Ascending aorta (tissue), 2 donors: ENCODE measurements at regions of chr1 and their contacts with region 1.

Region 1: DNA sequence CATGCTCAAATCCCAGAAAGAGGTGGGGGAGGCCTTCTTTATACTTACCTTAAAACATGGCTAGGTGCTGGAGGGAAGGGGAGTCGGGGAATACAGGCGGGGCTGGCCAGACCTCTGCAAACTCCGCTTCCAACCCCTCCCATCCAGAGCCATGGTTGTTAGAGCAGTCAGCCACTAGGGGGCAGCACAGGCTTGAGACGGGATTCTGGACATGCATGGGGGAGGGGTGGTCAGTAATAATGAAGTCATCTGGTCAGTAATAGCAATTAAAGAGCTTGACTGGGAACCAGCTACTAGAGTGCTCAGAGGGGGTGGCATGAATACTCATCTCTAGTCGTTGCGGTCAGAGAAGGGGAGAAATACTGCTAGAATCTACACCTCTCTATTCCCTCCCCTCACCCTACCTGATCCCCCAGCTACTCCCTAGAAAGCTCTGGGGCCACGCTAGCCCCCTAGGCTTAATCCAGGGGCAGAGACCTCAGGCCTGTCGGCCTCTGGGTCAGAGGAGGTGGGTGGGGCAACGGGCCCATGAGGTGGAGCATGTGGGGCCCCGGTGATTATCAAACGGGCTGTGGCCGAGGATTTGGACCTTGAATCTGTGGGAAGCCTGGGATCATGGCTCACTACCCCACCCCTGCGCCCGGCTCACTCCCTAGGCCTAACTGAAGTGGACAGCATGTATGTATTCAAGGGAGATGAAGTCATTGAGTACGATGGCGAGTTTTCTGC is 2.9 kb downstream of the CASQ1 start:
- DNase-seq: peak; percentile 50 to 91
- H3K4me3 ChIP-seq: peak overlapping the region in 1 of 2 donors; percentile 43
- H3K27ac ChIP-seq: peak overlapping the region in 1 of 2 donors; percentile 54
- H3K4me1 ChIP-seq: peaks cover 9 to 20% of the 10 kb centered on the region in 2 donors
- H3K27me3 ChIP-seq: no peaks in the 10 kb centered on the region
- CTCF ChIP-seq: peak; percentile 91 to 97 (median 94)

Region 2: DNA sequence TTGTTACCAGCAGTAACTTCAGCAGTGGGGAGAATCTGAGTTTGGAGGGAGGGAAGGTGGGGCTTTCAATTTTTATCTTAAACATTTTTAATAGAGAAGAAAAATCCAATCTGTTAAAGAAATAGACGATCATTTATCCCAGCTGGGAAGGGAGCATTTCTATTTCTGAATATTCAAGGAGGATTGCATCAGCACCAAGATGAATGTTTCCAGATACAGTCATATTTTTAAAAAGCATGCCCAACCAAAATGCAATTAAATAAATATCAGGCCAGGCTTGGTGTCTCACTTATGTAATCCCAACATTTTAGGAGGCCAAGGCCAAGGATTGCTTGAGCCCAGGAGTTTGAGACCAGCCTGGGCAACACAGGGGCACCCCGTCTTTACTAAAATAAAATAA is 43.5 kb before region 1 on chr1:
- intact Hi-C with region 1: loop called (anchors 5 kb)
- DNase-seq: no peak
- H3K4me3 ChIP-seq: no peak overlapping the region
- H3K27ac ChIP-seq: peak overlapping the region; percentile 67 to 72
- H3K4me1 ChIP-seq: peaks cover 5 to 12% of the 10 kb centered on the region in 2 donors
- H3K27me3 ChIP-seq: no peaks in the 10 kb centered on the region
- CTCF ChIP-seq: no peak

Region 3: GRCh38 chr1:160205242-160206035 is 12.2 kb after region 1 on chr1 and contains the start of gene PEA15:
- intact Hi-C with region 1: loop called (anchors 1 kb)
- DNase-seq: peak in 1 of 2 donors; percentile 85
- H3K4me3 ChIP-seq: peak within 1 kb of the TSS; percentile 87 to 94
- H3K27ac ChIP-seq: peak within 1 kb of the TSS; percentile 94 to 98
- H3K4me1 ChIP-seq: peaks cover under 1 to 42% of the 10 kb centered on the region in 2 donors
- H3K27me3 ChIP-seq: no peaks in the 10 kb centered on the region
- CTCF ChIP-seq: no peak
- total RNA-seq, gene PEA15: 178 TPM

Region 4: DNA sequence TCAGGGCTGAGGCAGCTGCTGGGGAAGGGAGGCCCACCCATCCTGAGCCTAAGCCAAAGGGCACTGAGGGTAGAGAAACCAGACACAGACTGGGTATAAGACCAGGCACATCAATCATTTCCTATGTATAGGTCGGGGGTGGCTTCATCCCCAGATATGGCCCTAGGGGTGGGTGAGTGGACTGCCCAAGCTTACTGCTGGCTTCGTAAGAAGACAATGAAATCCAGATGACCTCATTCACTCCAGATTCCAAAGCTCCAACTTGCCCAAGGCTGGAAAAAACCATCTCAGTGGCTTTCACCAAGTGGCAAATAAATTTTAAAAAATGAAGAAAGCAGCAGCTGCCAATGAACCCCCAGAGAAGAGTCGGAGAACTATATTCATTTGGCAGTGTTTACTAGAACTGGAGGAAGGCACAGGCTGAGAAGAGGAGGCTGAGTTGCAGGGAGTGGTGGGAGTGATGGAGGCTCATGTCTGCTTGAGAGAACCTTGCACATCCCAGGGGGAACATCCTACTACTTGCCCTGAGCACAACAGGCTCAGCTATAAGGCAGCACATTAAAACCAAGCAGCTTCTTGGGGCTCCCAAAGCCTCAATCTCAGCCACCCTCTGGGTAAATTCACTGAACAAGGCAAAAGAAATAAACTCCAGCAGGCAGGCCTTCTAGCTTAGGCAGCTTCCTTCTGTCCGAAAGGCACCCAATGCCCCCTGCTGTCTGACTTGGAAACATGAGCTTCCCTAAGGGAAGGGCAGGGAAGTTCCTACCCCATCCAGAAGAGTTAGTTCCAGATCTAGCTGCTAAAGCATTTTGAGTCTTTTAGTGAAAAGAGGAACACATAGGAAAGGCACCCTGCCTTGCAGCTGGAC is 26.0 kb after region 1 on chr1:
- intact Hi-C with region 1: loop called (anchors 1 kb)
- DNase-seq: peak in 1 of 2 donors; percentile 73
- H3K4me3 ChIP-seq: no peak overlapping the region
- H3K27ac ChIP-seq: peak overlapping the region; percentile 79 to 89
- H3K4me1 ChIP-seq: peaks cover 0 to 21% of the 10 kb centered on the region in 2 donors
- H3K27me3 ChIP-seq: no peaks in the 10 kb centered on the region
- CTCF ChIP-seq: peak; percentile 61 to 74 (median 65)

Region 5: GRCh38 chr1:160251687-160252526 is 58.7 kb after region 1 on chr1:
- intact Hi-C with region 1: loop called (anchors 1 kb)
- DNase-seq: peak in 1 of 2 donors; percentile 82
- H3K4me3 ChIP-seq: no peak overlapping the region
- H3K27ac ChIP-seq: peak overlapping the region; percentile 13 to 61
- H3K4me1 ChIP-seq: peaks cover 0 to 21% of the 10 kb centered on the region in 2 donors
- H3K27me3 ChIP-seq: no peaks in the 10 kb centered on the region
- CTCF ChIP-seq: peak; percentile 68 to 71 (median 70)

Region 6: GRCh38 chr1:160284782-160285344 is 91.6 kb after region 1 on chr1 and contains the start of gene PEX19:
- intact Hi-C with region 1: loop called (anchors 1 kb)
- DNase-seq: peak; percentile 65 to 96
- H3K4me3 ChIP-seq: peak within 1 kb of the TSS; percentile 72 to 86
- H3K27ac ChIP-seq: peak within 1 kb of the TSS; percentile 82 to 87
- H3K4me1 ChIP-seq: peaks cover 4 to 16% of the 10 kb centered on the region in 2 donors
- H3K27me3 ChIP-seq: no peaks in the 10 kb centered on the region
- CTCF ChIP-seq: no peak
- total RNA-seq, gene PEX19: 36.6 TPM

Region 7: DNA sequence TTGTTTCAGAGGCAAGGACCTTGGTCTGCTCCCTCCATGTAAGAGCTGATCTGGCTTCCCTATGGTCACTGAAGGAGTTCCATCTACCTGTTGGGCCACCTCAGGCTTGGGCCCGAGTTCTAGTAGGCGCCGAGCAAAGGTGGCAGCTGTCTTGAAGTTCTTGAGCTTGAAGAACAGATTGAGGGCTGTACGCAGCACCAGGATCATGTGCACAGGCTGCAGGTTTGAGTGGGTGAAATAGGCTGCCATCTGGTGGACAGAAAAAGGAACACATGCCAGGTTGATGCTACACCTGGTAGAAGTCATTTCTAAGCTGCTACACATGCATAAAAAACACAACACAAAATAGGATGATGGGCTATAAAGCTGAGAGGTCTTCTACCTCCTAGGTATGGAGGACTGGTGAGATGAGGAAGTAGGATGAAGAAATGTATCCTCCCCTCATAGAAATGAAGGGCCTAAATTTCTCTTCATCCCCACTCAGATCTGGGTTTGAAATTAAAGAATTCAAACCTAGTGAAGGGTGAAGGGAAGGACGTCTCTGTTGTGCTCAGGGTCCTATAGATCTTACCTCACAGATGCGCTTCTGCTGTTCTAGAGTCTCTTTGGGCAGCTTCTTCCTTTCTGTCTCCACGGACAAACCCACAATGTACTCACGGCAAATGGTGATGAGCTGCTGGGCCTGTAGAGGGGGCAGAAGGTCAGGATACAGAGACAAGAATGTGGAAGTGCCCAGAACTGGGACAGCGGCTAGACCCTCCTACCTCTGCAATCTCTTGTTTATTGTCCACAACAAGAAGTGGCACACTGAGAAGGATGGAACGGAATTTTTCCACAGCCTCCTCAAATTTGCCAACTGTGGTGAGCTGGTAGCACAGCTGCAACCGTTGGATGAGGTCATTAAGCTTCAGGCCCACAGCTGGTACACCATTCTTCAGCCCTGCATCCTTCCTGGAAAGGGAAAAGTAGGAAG is 98.3 kb after region 1 on chr1:
- intact Hi-C with region 1: loop called (anchors 1 kb)
- DNase-seq: peak in 1 of 2 donors; percentile 72
- H3K4me3 ChIP-seq: no peak overlapping the region
- H3K27ac ChIP-seq: no peak overlapping the region
- H3K4me1 ChIP-seq: no peaks in the 10 kb centered on the region
- H3K27me3 ChIP-seq: no peaks in the 10 kb centered on the region
- CTCF ChIP-seq: peak; percentile 69 to 81 (median 74)

Region 8: DNA sequence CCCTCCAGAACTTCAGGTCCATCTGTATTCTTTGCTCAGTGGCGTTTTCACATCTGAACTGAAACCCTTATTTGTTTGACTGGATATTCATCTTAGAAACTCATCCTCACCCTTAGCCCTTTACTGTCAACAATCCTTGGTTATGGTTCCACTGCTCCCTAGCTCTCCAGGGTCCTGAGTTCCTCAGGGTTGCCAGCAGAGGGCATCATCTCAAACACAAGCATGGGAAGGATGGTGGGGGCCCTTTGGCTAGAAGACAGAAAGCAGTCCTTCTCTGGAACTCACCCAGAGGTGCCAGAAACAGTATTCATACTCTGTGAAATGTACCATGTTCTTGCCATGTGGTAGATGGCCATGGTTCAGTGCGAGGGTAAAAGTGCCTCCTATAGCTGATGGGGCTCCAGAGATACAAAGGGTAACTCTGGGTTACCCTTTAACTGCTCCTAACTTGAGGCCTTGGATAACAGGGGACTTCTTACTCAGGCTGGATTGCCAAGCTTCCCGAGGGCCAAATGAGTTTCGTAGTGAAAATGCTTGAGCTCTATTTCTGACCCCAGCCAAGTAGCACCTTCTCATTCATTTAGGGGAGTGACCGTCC is 161.2 kb after region 1 on chr1:
- intact Hi-C with region 1: no loop called
- DNase-seq: no peak
- H3K4me3 ChIP-seq: no peak overlapping the region
- H3K27ac ChIP-seq: no peak overlapping the region
- H3K4me1 ChIP-seq: no peaks in the 10 kb centered on the region
- H3K27me3 ChIP-seq: no peaks in the 10 kb centered on the region
- CTCF ChIP-seq: peak in 1 of 3 experiments; percentile 8